ENCODE measurements at regions of chr4 and their contacts with region 1.

Region 1: GRCh38 chr4:105471566-105472176 is 2.2 kb downstream of the PPA2 start:
- DNase-seq: peak; percentile 78
- H3K4me3 Mint-ChIP-seq: peak overlapping the region; percentile 99
- H3K27ac Mint-ChIP-seq: peak overlapping the region; percentile 99
- H3K4me1 Mint-ChIP-seq: peaks cover 51% of the 10 kb centered on the region
- H3K27me3 Mint-ChIP-seq: no peaks in the 10 kb centered on the region

Region 2: DNA sequence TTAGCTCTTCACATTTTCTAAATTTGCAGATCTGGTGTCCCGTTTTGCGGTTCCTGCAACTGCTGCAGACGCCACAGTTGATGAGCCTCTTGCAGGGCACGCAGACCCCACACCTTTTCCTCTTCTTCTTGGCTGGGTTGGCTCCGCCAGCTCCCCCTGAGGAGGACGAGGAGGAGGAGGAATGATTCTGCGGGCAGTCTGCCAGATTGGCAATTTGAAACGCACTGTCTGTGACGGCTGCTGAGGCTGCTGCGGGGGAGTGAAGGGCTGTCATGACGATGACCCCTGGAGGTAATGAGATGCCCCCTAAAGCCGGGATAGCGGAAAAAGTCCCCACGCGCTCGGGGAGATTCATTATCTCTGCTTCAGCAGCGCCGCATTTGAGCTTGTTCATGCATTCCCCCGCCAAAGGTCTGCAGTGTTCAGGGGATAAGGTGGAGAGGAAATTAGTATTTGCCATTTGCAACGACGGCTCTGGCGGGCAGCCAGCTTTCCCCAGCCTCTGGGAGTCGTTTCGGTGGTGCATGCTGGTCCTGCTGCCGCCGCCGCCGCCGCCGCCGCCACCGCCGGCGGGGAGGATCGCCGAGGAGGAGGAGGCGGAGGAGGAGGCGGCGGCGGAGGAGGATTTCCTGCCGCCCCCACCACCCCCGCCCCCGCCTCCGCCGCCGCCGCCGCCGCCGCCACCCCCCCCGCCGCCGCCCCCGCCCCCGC is 980.7 kb before region 1 on chr4:
- CTCF ChIA-PET with region 1: no interaction called
- POLR2A ChIA-PET with region 1: no interaction called
- intact Hi-C with region 1: loop called (anchors 5 kb)
- DNase-seq: peak; percentile 51
- H3K4me3 Mint-ChIP-seq: peak overlapping the region; percentile 67
- H3K27ac Mint-ChIP-seq: no peak overlapping the region
- H3K4me1 Mint-ChIP-seq: peaks cover 41% of the 10 kb centered on the region
- H3K27me3 Mint-ChIP-seq: peaks cover 52% of the 10 kb centered on the region

Region 3: DNA sequence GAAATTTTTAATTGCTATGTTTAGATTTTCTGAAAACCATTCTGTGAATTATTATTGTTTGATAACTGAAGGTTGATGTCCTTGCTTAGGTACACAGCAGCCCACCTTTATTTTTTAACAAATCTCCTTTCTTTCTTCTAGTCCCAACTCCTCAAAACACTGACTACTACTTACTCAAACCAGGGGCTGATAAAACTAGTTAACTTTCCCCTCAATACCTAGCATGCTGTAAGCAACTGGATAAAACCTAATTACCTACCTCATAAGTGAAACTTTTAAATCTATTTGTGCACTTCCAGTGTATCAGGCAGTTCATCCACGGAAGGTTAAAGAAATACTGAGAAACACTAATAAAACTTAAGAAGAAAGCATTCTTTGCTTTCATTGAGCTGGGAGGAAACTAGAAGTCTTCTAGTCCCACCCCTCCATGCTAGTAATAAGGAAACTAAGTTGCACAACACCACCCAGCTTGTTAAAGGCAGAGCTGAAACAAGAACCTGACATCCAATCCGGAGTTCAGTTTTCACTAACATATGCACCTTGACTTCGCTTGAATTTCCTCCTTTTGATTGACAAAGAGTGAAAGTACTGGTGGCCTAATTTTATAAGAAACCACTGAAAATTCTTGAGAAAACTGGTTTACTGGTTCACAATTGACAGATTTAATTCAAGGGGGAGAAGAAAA is 505.2 kb before region 1 on chr4:
- CTCF ChIA-PET with region 1: no interaction called
- POLR2A ChIA-PET with region 1: no interaction called
- intact Hi-C with region 1: loop called (anchors 1 kb)
- DNase-seq: peak; percentile 47
- H3K4me3 Mint-ChIP-seq: peak overlapping the region; percentile 48
- H3K27ac Mint-ChIP-seq: peak overlapping the region; percentile 79
- H3K4me1 Mint-ChIP-seq: peaks cover 15% of the 10 kb centered on the region
- H3K27me3 Mint-ChIP-seq: peaks cover 5% of the 10 kb centered on the region

Region 4: DNA sequence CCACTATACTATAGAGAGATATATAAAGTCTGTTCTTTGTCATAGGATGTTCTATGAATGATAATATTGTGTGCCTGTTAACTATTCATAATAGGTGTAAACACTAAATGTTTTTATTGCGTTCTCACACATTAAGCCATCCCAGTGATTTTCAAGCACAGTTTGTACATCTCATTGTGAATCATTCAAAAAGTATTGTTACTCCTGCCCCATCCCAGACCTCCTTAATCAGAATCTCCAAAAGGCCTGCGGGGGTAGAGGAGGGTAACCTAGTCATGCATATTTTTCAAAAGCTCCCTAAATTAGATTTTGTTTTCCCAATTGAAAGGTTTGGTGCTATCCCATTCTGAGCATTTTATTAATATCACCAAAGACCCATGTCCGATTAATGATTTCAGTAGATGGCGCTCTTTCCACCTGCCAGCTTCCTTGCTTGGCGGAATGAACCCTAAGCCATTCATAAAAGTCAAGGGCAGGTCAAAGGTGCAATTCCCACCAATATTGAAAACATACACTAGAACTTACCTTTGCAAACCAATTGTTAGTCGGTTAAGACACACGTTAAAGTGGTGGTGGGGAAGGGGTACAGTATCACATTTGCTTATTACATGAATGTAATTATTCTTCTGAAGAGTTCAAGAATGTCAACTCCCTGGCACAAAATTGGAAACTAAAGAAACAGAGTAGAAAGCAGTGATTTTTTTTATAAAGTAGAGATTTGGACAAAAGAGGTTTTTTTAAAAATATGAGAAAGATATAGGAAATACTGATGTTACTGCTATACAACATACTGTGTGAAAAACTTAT is 330.8 kb before region 1 on chr4:
- CTCF ChIA-PET with region 1: interaction called, 14 read pairs
- POLR2A ChIA-PET with region 1: interaction called, 6 read pairs
- intact Hi-C with region 1: loop called (anchors 1 kb)
- DNase-seq: peak; percentile 50
- H3K4me3 Mint-ChIP-seq: no peak overlapping the region
- H3K27ac Mint-ChIP-seq: no peak overlapping the region
- H3K4me1 Mint-ChIP-seq: peaks cover 39% of the 10 kb centered on the region
- H3K27me3 Mint-ChIP-seq: no peaks in the 10 kb centered on the region

Region 5: DNA sequence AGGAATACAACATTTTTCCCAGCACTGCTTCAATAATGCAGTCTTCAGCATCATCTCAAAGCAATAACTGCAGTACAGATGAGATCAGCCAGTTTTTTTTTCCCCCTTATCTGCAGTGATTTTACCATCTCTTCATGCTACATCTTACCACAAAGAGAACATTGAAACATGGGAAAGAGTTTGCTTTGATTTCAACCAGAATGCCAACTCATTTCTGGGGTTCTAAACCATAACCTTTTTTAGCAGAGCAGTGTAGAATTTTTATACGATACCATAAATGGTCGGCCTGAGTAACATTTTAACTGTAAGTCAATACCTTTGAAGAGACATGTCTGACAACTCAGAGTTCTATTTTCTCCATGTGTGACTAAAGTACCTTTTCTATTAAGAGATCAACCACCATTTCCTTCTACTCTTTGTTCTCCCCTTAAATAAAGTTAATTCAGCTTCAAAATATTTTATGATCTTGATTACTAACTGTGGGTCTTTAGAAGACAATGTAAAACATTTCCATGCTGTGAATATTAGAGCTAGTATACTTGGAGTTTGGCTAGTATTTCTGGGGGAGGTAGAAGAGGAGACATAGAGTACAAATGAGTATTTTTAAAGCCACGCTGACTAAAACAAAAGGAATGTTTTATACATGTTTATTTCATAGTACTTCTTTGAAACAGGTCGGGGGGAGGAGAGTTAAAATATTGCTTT is 255.9 kb before region 1 on chr4:
- CTCF ChIA-PET with region 1: interaction called, 4 read pairs
- POLR2A ChIA-PET with region 1: no interaction called
- intact Hi-C with region 1: loop called (anchors 1 kb)
- DNase-seq: no peak
- H3K4me3 Mint-ChIP-seq: peak overlapping the region; percentile 14
- H3K27ac Mint-ChIP-seq: peak overlapping the region; percentile 65
- H3K4me1 Mint-ChIP-seq: peaks cover 42% of the 10 kb centered on the region
- H3K27me3 Mint-ChIP-seq: no peaks in the 10 kb centered on the region

Region 6: DNA sequence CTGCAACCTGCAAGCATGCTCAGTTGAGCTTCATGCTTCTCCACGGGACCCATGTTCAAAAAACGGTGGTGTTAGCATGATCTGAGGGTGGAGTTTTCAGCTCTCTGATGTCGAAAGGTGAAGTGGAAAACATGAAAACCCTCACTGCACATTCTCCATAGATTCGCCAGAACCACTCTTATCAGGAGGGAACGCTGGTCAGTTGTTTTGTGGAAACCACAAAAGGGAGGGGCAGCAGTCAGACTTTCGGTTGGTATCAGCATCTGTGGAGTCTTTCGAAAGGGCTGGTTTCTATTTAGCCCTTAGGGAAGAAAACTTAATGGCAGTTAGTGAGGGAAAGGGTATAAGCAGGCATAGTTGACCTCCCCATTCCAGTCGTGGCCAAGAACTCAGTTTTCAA is 10.4 kb before region 1 on chr4:
- CTCF ChIA-PET with region 1: interaction called, 18 read pairs
- POLR2A ChIA-PET with region 1: no interaction called
- intact Hi-C with region 1: no loop called
- DNase-seq: no peak
- H3K4me3 Mint-ChIP-seq: no peak overlapping the region
- H3K27ac Mint-ChIP-seq: no peak overlapping the region
- H3K4me1 Mint-ChIP-seq: peaks cover 30% of the 10 kb centered on the region
- H3K27me3 Mint-ChIP-seq: no peaks in the 10 kb centered on the region

Region 7: DNA sequence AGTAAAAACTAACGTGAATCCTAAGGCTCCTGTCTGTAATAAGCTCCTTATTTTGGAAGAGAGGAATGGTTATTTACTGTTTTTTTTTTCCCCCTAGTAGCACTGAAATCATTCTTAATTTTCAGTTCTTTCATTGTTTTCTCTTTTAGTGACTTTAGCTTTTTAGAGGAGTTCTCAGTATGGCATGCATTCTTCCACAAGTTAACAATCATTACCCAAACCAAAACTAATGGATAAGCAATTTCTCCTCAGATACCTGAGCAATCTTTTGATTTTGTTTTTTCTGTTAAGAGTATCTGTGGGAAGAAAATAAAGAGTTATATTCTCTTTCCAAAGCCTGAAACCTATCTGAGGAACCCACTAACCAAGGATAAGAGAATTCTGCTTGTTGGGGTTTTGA is 18.9 kb after region 1 on chr4:
- CTCF ChIA-PET with region 1: no interaction called
- POLR2A ChIA-PET with region 1: no interaction called
- intact Hi-C with region 1: no loop called
- DNase-seq: no peak
- H3K4me3 Mint-ChIP-seq: no peak overlapping the region
- H3K27ac Mint-ChIP-seq: no peak overlapping the region
- H3K4me1 Mint-ChIP-seq: no peaks in the 10 kb centered on the region
- H3K27me3 Mint-ChIP-seq: peaks cover 8% of the 10 kb centered on the region

Region 8: DNA sequence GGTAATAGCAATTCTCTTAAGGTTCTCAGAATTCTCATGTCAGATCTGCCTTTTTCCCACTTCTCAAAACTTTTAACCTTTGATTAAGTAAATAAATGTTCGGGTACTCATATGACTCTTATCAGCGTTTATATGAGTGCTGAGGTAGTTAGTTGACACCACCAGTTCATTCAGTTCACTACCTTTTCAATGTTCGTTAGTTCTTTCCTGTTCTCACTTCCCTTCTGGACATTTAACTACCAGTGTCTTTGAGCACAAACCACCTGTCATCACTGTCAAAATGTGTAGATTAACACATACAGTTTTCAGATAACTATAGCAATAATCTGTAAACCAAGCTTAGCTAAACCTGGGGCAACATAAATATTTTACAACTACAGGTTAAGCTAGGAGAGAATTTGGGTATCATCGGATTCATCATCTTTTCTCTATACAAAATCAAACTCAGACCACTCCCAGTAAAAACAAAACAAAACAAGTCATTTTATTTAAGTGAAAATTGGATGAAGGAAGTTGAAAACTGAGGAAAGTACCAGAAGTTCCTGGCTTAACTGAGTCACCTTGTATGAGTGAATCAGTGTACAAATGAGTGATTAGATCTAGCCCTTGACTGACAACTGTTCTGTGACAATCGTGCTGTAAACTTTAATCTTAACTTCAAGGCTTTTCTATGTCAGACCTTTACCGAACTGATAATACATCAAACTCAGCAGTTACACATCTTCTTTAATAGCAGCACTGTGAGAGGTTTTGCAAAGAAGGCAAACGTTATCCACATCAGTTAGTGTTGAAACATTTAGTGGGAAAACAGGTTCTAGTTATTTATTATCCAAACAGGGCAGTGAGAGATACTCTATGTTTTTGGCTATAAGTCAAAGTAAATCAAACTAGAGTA is 122.7 kb after region 1 on chr4:
- CTCF ChIA-PET with region 1: no interaction called
- POLR2A ChIA-PET with region 1: no interaction called
- intact Hi-C with region 1: no loop called
- DNase-seq: no peak
- H3K4me3 Mint-ChIP-seq: no peak overlapping the region
- H3K27ac Mint-ChIP-seq: no peak overlapping the region
- H3K4me1 Mint-ChIP-seq: peaks cover 7% of the 10 kb centered on the region
- H3K27me3 Mint-ChIP-seq: peaks cover 21% of the 10 kb centered on the region

Region 9: DNA sequence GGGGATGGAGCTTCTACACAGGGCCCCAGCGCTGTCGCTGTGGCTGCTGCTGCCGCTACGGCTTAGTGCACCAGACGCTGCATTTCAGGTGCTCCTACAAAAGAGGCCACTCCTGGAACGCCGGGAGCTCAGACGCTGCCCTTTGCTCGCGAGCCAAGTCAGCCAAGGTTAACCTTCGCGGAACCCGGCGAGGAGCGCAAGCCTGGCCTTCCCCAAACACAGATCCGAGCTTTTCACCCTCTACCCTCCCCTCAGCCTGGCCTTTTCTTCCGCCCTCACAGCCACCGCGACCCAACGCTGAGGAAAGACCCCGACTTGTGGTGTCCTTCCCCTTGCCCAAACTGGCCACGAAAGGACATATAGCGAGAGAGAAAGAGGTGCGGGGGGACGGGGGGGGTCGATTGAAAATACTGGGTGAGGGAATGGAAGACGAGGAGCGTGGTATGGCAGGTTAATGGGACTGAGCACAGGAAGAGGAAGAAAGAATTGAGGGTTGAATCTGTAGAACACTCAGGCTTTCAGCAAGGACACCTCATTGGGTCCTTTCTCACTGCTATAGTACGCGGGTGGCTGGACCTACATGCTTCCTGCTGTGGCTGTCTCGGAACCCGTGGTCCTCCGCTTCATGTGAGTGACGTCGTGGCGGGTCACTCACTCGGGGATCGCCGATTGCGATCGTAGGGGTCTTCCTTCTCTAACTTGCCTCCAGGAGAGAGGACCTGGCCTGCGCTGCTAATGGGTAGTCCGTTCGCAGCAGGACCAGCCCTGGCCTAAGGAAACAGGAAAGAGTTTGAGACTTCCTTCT is 844.5 kb after region 1 on chr4 and contains the starts of genes AIMP1 and TBCK:
- CTCF ChIA-PET with region 1: no interaction called
- POLR2A ChIA-PET with region 1: no interaction called
- intact Hi-C with region 1: loop called (anchors 5 kb)
- DNase-seq: peak; percentile 92
- H3K4me3 Mint-ChIP-seq: no peak within 1 kb of the TSS
- H3K27ac Mint-ChIP-seq: no peak within 1 kb of the TSS
- H3K4me1 Mint-ChIP-seq: peaks cover 44% of the 10 kb centered on the region
- H3K27me3 Mint-ChIP-seq: no peaks in the 10 kb centered on the region
- total RNA-seq, gene AIMP1: 59.2 to 60.1 TPM
- total RNA-seq, gene TBCK: 20.2 to 22.0 TPM